Activated T-helper 1 cell treated with anti-CD3 and anti-CD28 coated beads, Interleukin-12 subunit alpha, Interleukin-12 subunit beta, Interleukin-2, Interleukin-4 antibody, amounts not matched to agents 30 ng/mL and 10 ng/mL and 1 ng/mL, durations not matched to agents 14 hours and 24 hours and 36 hours (primary cell): ENCODE measurements at regions of chr4 and their contacts with region 1.

Region 1: GRCh38 chr4:36244257-36245079 is at the start of gene ARAP2:
- DNase-seq: peak; percentile 68
- H3K4me3 Mint-ChIP-seq: peak within 1 kb of the TSS; percentile 94
- H3K27ac Mint-ChIP-seq: peak within 1 kb of the TSS; percentile 97
- H3K4me1 Mint-ChIP-seq: peaks cover 41% of the 10 kb centered on the region
- H3K27me3 Mint-ChIP-seq: peaks cover 9% of the 10 kb centered on the region
- total RNA-seq, gene ARAP2: 40.1 and 54.9 TPM in 2 replicates

Region 2: DNA sequence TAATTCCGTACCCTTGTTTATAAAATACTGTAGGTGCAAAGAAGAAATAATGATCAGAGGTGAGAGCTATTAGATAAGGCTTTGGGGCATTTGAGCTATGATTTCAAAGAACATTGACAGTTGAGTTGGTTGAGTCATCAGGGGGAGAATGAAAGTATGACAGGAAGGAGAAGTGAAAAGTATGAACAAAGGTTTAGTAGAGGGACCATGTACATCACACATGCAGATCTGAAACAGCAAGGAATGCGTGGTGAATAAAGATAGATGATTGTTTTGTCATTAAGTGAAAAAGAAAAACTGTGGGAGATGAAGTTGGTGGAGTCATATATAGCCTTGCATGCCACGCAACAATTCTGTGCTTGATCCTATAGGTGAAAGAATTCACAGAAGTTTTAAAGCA is 163.3 kb before region 1 on chr4:
- intact Hi-C with region 1: loop called (anchors 5 kb)
- DNase-seq: no peak
- H3K4me3 Mint-ChIP-seq: no peak overlapping the region
- H3K27ac Mint-ChIP-seq: no peak overlapping the region
- H3K4me1 Mint-ChIP-seq: peaks cover 3% of the 10 kb centered on the region
- H3K27me3 Mint-ChIP-seq: no peaks in the 10 kb centered on the region

Region 3: GRCh38 chr4:36208893-36209473 is 35.5 kb before region 1 on chr4:
- intact Hi-C with region 1: loop called (anchors 1 kb)
- DNase-seq: peak; percentile 10
- H3K4me3 Mint-ChIP-seq: peak overlapping the region; percentile 56
- H3K27ac Mint-ChIP-seq: peak overlapping the region; percentile 70
- H3K4me1 Mint-ChIP-seq: peaks cover 64% of the 10 kb centered on the region
- H3K27me3 Mint-ChIP-seq: no peaks in the 10 kb centered on the region

Region 4: GRCh38 chr4:36233567-36234266 is 10.8 kb before region 1 on chr4:
- intact Hi-C with region 1: loop called (anchors 1 kb)
- DNase-seq: no peak
- H3K4me3 Mint-ChIP-seq: no peak overlapping the region
- H3K27ac Mint-ChIP-seq: peak overlapping the region; percentile 51
- H3K4me1 Mint-ChIP-seq: peaks cover 68% of the 10 kb centered on the region
- H3K27me3 Mint-ChIP-seq: no peaks in the 10 kb centered on the region

Region 5: GRCh38 chr4:36269101-36269500 is 24.6 kb after region 1 on chr4:
- intact Hi-C with region 1: loop called (anchors 1 kb)
- DNase-seq: peak; percentile 59
- H3K4me3 Mint-ChIP-seq: no peak overlapping the region
- H3K27ac Mint-ChIP-seq: peak overlapping the region; percentile 75
- H3K4me1 Mint-ChIP-seq: peaks cover 56% of the 10 kb centered on the region
- H3K27me3 Mint-ChIP-seq: no peaks in the 10 kb centered on the region

Region 6: DNA sequence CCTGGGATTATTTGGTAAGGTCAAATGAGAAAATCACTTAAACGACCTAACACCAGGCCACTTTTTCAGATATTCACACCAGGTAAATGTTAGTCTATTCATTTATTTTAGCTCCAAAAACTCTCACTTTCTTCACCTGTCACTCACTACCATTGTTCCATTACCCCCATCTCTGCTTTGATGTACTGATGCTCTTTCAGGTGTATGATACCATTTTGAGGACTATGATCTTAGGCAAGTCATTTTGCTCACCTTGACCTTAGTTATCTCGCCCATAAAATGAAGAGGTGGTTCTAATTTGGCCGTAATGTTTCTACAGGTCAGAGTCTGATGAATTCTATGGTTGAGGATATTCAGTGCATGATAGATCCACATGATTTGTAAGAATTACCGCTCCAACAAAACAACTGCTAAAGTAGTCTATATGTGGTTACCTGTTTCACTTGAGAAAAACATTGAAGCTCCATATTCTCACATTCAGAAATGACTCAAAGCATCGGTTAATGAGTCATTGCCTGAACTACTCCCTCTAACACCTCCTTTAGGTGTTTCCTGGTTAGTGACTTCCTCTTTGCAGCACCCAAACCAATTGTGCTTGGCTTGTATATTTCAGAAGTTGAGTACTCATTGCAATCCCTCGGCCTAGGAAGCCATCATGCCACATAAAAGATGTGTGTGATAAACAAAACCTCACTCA is 41.5 kb after region 1 on chr4:
- intact Hi-C with region 1: loop called (anchors 1 kb)
- DNase-seq: peak; percentile 79
- H3K4me3 Mint-ChIP-seq: peak overlapping the region; percentile 49
- H3K27ac Mint-ChIP-seq: peak overlapping the region; percentile 95
- H3K4me1 Mint-ChIP-seq: peaks cover 78% of the 10 kb centered on the region
- H3K27me3 Mint-ChIP-seq: peaks cover 2% of the 10 kb centered on the region

Region 7: DNA sequence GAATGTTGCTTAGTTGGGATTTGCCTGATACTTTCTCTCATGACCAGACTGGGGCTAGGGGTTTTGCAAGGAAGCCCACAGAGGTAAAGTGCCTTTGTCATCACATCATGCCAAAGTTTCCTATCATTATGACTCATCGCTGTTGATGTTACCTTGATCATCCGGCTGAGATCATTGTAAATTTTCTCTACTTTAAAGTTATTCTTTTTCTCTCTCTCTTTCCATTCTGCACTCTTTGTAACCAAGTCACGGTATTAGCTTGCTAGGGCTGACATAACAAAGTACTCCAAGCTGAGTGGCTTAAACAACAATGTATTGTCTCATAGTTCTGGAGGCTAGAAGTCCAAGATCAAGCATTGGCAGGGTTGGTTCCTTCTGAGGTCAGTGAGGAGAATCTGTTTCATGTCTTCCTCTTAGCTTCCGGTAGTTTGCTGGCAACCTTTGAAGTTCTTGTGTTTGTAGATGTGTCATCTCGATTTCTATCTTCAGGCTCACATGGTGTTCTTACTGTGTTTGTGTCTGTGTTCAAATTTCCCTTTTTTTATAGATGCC is 150.0 kb after region 1 on chr4:
- intact Hi-C with region 1: loop called (anchors 1 kb)
- DNase-seq: peak; percentile 56
- H3K4me3 Mint-ChIP-seq: peak overlapping the region; percentile 71
- H3K27ac Mint-ChIP-seq: peak overlapping the region; percentile 97
- H3K4me1 Mint-ChIP-seq: peaks cover 34% of the 10 kb centered on the region
- H3K27me3 Mint-ChIP-seq: peaks cover 5% of the 10 kb centered on the region